ENCODE measurements at regions of chr1 and their contacts with region 1.

Region 1: GRCh38 chr1:110976089-110976488 is 12.4 kb upstream of the LRIF1 start:
- ATAC-seq: no peak
- H3K4me3 ChIP-seq: no peak overlapping the region
- H3K27ac ChIP-seq: no peak overlapping the region
- H3K4me1 ChIP-seq: no peaks in the 10 kb centered on the region

Region 2: GRCh38 chr1:110780600-110781484 is 195.2 kb before region 1 on chr1:
- in situ Hi-C with region 1: loop called in 1 of 9 experiments (anchors 25 kb)
- ATAC-seq: peak; percentile 56 to 87 (median 81)
- H3K4me3 ChIP-seq: no peak overlapping the region
- H3K27ac ChIP-seq: no peak overlapping the region
- H3K4me1 ChIP-seq: no peaks in the 10 kb centered on the region

Region 3: DNA sequence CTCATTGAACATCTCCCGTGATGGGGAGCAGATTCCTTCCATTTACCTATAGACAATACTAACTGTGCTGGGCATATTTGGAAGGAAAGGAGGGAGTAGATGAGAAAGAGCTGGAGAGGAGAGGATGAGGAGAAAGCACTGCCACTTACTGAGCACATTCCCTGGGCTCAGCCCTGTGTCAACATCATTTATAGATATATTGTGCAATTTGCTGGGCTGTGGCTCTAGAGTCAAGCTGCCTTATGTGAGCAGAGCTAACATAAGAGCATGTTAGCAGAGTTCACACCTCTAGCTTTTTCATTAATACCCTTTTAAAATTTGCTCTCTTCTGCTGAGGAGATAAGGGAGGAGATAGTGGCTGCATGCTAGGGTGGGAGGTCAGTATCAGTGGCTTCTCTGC is 125.5 kb before region 1 on chr1:
- in situ Hi-C with region 1: no loop called
- ATAC-seq: peak in 1 of 8 experiments; percentile 33
- H3K4me3 ChIP-seq: no peak overlapping the region
- H3K27ac ChIP-seq: no peak overlapping the region
- H3K4me1 ChIP-seq: no peaks in the 10 kb centered on the region

Measured in motor neuron (in vitro differentiated cells).